WTC11 (cell line): ENCODE measurements at regions of chr19 and their contacts with region 1.

Region 1: GRCh38 chr19:46860125-46860845 is 512 bp upstream of the ARHGAP35 start:
- DNase-seq: peak; percentile 98
- ATAC-seq: peak; percentile 76
- H3K4me3 Mint-ChIP-seq: peak overlapping the region; percentile 74
- H3K27ac Mint-ChIP-seq: peak overlapping the region; percentile 98
- H3K4me1 Mint-ChIP-seq: peaks cover 15% of the 10 kb centered on the region
- H3K27me3 Mint-ChIP-seq: peaks cover 6% of the 10 kb centered on the region
- CTCF ChIP-seq: no peak

Region 2: DNA sequence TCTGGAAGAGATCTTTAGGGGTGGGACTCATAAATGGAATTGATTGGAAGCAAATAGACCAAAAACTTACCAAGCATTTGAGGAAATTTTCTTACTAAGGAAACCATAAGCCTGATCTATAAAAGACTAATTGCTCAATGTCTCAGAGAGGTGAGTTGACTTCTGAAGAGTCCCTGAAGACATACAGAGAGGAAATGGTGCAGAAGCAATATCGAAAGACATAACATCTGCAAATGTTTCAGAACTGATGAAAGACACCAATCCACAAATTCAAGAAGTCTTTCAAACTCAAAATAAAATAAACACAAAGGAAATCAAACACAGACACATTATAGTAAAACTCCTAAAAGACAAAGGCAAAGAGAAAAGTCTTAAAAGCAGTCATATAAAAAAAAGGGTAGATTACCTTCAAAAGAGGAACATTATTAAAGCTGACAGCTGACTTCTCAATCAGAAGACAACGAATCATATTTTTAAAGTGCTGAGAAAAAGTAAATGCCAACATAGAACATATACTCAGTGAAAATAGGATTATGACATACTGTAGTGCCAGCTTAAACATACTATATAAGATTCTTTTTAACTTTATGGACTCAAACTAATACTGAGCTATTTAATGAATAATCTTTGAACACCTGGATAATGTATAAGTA is 304.5 kb before region 1 on chr19:
- CTCF ChIA-PET with region 1: no interaction called
- POLR2A ChIA-PET with region 1: no interaction called
- DNase-seq: no peak
- ATAC-seq: no peak
- H3K4me3 Mint-ChIP-seq: no peak overlapping the region
- H3K27ac Mint-ChIP-seq: no peak overlapping the region
- H3K4me1 Mint-ChIP-seq: no peaks in the 10 kb centered on the region
- H3K27me3 Mint-ChIP-seq: peaks cover 34% of the 10 kb centered on the region
- CTCF ChIP-seq: no peak

Region 3: DNA sequence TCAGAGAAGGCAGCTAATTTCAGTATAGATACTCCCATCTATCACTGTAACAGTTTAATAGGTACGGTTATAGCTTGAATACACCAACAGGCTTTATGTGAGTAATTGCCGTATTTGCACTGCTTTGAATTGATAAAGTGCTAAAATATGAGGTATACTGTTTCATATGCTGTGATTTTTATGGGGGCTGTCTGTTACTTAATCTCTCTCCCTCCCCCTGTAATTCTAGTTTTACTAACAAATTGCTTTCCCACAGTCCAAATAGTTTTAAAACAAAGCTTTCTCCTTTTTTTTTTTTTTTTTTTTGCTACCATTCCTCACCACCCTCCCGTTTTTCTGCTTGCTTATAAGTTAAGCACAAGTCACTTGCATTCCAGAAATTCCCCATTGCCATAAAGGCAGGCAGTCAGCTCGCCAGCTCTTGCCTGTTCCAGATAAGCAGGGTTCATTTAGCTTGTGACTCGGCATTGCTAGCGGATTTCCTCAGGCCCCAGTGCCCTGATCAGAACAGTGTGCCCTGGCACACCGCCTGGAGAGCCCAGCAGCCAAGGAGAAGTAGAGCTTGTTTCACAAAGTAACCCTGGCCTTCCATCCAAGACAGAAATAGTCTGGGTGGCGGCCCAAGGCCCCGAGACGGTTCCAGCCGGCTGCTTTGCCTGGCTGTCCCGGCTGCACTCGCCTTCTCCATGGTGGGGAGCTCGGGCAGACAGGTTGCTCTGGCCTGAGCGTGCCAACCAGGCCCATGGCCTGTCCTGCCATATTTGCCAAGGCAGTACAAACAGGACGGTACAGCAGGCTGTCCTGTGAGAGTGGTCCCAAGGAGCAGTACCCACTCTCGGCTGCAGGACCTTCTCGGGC is 115.9 kb after region 1 on chr19:
- CTCF ChIA-PET with region 1: interaction called, 10 read pairs
- POLR2A ChIA-PET with region 1: no interaction called
- DNase-seq: peak; percentile 40
- ATAC-seq: peak; percentile 46
- H3K4me3 Mint-ChIP-seq: 0 out of 2 replicates have a peak overlapping the region, but pooled peaks have one; percentile 2
- H3K27ac Mint-ChIP-seq: peak overlapping the region; percentile 91
- H3K4me1 Mint-ChIP-seq: peaks cover 46% of the 10 kb centered on the region
- H3K27me3 Mint-ChIP-seq: no peaks in the 10 kb centered on the region
- CTCF ChIP-seq: no peak

Region 4: DNA sequence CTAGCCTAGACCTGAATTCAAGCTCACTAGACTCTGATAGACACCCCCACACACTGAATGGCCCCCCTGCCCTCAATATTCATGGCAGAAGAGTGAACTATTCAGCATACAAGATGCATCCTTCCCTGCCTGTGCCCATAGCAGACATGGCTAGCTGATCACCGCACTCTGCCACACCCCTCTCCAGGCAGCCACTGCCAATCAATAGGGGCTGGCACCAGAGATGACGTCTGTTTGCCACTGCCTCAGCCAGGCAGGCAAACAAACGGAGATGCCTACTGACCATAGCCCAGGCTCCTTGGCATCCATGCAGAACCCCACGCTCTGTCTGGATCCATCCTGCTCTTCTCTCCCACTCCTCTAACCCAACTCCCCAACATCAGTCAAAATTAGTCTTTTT is 145.6 kb after region 1 on chr19:
- CTCF ChIA-PET with region 1: interaction called, 15 read pairs
- POLR2A ChIA-PET with region 1: no interaction called
- DNase-seq: no peak
- ATAC-seq: peak; percentile 40; the same call in 1 of the 2 replicates
- H3K4me3 Mint-ChIP-seq: no peak overlapping the region
- H3K27ac Mint-ChIP-seq: peak overlapping the region; percentile 7
- H3K4me1 Mint-ChIP-seq: peaks cover 21% of the 10 kb centered on the region
- H3K27me3 Mint-ChIP-seq: peaks cover 9% of the 10 kb centered on the region
- CTCF ChIP-seq: no peak